OCI-LY7 (cell line): ENCODE measurements at regions of chr1 and their contacts with region 1.

Region 1: GRCh38 chr1:202462342-202463076 is 114.0 kb downstream of the PPP1R12B start:
- DNase-seq: no peak
- H3K4me3 ChIP-seq: no peak overlapping the region
- H3K27ac ChIP-seq: no peak overlapping the region
- H3K4me1 ChIP-seq: no peaks in the 10 kb centered on the region
- CTCF ChIP-seq: no peak

Region 2: DNA sequence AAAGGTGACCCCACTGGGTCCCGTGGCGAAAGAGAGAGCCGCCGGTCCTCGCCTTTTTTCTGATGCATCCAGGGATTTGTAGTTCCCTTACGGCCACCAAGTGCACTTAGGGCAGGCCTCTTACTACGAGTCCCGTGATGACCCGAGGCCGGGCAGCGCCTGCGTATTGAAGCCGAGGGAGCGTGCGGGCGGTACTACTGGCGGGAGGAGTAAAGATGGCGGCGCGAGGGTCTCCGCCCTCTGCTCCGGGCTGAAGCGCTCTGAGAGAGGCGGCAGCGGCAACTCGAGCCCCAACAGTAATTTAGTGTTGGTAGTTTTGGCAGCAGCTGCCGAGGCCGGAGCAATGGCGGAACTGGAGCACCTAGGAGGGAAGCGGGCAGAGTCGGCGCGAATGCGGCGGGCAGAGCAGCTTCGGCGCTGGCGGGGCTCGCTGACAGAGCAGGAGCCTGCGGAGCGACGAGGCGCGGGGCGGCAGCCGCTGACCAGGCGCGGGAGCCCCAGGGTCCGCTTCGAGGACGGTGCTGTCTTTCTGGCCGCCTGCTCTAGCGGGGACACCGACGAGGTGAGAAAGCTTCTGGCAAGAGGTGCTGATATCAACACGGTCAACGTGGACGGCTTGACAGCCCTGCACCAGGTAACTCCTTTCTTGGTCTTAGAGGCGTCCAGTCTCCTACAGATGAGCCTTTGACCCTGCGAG is 113.9 kb before region 1 on chr1 and contains the start of gene PPP1R12B:
- CTCF ChIA-PET with region 1: no interaction called
- POLR2A ChIA-PET with region 1: no interaction called
- intact Hi-C with region 1: no loop called
- DNase-seq: peak; percentile 98
- H3K4me3 ChIP-seq: peak within 1 kb of the TSS; percentile 86
- H3K27ac ChIP-seq: peak within 1 kb of the TSS; percentile 22
- H3K4me1 ChIP-seq: peaks cover 19% of the 10 kb centered on the region
- CTCF ChIP-seq: no peak
- total RNA-seq, gene PPP1R12B: 19.1 and 37.1 TPM in 2 replicates

Region 3: GRCh38 chr1:202571347-202572339 is 109.1 kb after region 1 on chr1:
- CTCF ChIA-PET with region 1: no interaction called
- POLR2A ChIA-PET with region 1: no interaction called
- intact Hi-C with region 1: loop called (anchors 5 kb)
- DNase-seq: peak; percentile 59
- H3K4me3 ChIP-seq: no peak overlapping the region
- H3K27ac ChIP-seq: no peak overlapping the region
- H3K4me1 ChIP-seq: peaks cover 1% of the 10 kb centered on the region
- CTCF ChIP-seq: peak; percentile 95

Region 4: DNA sequence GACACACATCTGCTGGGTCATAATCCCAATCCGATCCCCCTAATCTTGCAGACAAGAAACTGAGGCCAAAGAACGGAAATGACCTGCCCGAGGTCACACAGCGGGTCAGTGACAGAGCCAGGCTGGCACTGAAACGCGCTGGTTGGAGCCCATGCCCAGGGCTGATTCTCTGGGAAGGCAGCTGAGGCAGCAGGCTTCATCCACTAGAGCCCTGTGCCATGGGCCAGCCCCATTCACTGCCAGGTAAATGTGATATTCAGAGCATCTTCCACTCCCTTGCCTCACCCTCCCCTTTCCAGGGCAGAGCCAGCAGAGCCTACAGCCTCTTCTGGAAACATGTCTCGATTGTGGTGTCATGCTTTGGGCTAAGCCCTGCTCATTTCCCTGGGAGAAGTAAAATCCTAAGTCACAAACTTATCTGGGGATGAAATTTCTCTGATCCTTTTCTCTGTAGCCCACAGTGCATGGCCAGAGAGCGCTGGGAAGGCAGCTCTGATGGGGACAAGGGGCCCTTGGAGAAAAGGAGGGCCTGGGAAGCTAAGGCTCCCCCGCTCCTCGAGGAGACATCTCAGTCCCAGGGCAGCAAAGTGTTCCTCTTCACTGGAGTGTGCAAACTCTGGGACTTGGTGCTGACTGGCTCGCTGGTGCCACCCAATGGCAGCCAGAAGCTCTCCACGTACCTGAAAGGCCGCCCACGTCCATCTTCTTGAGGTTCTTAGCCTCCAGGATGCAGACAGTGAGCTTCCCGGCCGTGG is 137.3 kb after region 1 on chr1:
- CTCF ChIA-PET with region 1: no interaction called
- POLR2A ChIA-PET with region 1: no interaction called
- intact Hi-C with region 1: loop called (anchors 1 kb)
- DNase-seq: peak; percentile 67
- H3K4me3 ChIP-seq: no peak overlapping the region
- H3K27ac ChIP-seq: no peak overlapping the region
- H3K4me1 ChIP-seq: peaks cover 4% of the 10 kb centered on the region
- CTCF ChIP-seq: peak; percentile 81

Region 5: GRCh38 chr1:202625416-202626360 is 163.2 kb after region 1 on chr1:
- CTCF ChIA-PET with region 1: no interaction called
- POLR2A ChIA-PET with region 1: no interaction called
- intact Hi-C with region 1: loop called (anchors 1 kb)
- DNase-seq: peak; percentile 68
- H3K4me3 ChIP-seq: no peak overlapping the region
- H3K27ac ChIP-seq: no peak overlapping the region
- H3K4me1 ChIP-seq: peaks cover 27% of the 10 kb centered on the region
- CTCF ChIP-seq: peak; percentile 68